ENCODE measurements at regions of chr17 and their contacts with region 1.

Region 1: DNA sequence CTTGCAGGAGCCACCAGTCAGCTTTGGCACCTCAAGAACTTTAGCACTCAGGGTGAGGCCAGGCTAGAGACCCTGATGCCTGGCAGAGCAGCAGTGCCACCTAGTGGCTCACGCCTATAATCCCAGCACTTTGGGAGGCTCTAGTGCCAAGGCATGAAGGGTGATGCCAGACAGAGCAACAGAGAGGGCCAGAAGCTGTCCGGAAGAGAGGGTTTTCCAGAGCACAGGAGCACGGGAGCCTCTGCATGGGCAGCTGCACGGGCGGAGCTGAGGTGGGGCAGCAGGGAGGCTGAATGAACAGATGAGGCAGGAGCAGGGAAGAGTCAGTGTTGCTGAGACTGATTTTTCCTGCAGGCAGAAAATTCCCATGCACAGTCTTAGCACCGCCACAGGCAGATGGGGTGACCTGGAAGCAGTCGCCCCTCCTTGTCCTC is 38.9 kb downstream of the MYH3 start:
- DNase-seq: peak; percentile 55 to 60
- H3K4me3 ChIP-seq: no peak overlapping the region
- H3K27ac ChIP-seq: no peak overlapping the region
- H3K4me1 ChIP-seq: no peaks in the 10 kb centered on the region
- H3K27me3 ChIP-seq: peaks cover 20% of the 10 kb centered on the region
- CTCF ChIP-seq: peak; percentile 78

Region 2: DNA sequence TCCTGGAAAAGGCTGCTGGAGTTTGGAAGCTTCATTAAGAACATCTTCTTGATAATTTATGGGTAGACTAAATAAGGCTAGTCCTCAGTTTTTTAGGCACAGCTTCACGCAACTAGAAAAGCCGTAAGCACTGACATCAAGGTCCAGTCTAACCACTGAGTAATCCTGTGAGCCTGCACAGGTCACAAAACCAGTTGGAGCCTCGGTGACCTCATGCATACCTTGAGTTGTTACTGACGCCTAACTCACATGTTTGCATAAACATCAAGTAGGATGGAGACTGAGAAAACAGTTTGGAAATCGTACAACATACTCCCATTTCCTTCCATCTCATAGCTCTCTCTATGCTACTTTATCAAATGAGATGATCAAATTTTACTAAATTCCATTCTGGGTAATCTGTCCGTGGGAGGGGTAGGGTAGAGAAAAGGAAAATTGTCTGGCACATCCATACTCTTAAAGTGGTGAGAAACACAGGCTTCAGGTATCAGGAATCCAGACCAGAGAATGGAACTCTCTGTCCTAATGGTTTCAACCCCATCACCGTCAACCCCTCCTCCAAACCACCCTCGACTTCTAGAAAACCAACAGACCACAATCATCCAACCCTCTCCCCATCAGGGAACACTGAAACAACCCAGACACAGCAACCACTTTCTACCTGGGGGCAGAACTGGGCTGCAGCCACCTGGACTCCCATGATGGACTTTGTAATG is 649.2 kb before region 1 on chr17:
- CTCF ChIA-PET with region 1: no interaction called
- POLR2A ChIA-PET with region 1: no interaction called
- intact Hi-C with region 1: loop called (anchors 1 kb)
- DNase-seq: peak in 1 of 2 experiments; percentile 40
- H3K4me3 ChIP-seq: no peak overlapping the region
- H3K27ac ChIP-seq: no peak overlapping the region
- H3K4me1 ChIP-seq: no peaks in the 10 kb centered on the region
- H3K27me3 ChIP-seq: peaks cover 66% of the 10 kb centered on the region
- CTCF ChIP-seq: no peak

Region 3: DNA sequence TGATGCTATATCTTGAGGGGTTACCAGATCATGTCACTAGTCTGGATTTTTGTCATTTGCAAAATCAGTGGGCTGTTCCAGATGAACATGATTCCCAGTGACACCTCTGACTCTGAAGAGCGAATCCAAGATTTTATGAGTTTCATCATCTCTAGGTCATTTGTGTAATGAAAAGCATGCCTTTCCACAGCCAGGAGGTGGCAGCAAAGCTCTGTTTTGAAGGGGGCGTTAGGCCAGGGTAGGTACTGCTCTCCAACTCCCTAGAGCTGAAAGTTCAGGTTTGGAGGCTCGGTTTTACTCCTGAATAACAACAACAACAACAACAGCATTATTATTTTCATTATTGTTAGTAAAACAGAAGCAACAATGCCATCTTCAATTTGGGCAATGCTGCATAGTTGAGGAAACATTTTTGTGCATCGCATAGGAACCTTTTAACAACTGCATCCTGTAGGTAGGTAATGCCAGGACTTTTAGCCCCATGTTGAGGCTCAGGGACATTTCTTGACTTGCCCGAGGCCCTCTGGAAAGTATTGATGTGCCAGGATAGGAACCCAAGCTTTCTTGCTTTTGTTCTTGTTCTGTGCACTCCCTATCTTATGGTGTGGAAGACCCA is 322.4 kb before region 1 on chr17:
- CTCF ChIA-PET with region 1: interaction called, 4 read pairs
- POLR2A ChIA-PET with region 1: no interaction called
- intact Hi-C with region 1: loop called (anchors 10 kb)
- DNase-seq: peak in 1 of 2 experiments; percentile 18
- H3K4me3 ChIP-seq: no peak overlapping the region
- H3K27ac ChIP-seq: no peak overlapping the region
- H3K4me1 ChIP-seq: no peaks in the 10 kb centered on the region
- H3K27me3 ChIP-seq: no peaks in the 10 kb centered on the region
- CTCF ChIP-seq: peak; percentile 58

Region 4: GRCh38 chr17:10327640-10328039 is 290.6 kb before region 1 on chr17:
- CTCF ChIA-PET with region 1: no interaction called
- POLR2A ChIA-PET with region 1: no interaction called
- intact Hi-C with region 1: loop called (anchors 1 kb)
- DNase-seq: peak; percentile 36 to 62
- H3K4me3 ChIP-seq: no peak overlapping the region
- H3K27ac ChIP-seq: no peak overlapping the region
- H3K4me1 ChIP-seq: no peaks in the 10 kb centered on the region
- H3K27me3 ChIP-seq: peaks cover 4% of the 10 kb centered on the region; the same call in 1 of the 2 replicates
- CTCF ChIP-seq: peak; percentile 86

Region 5: GRCh38 chr17:10683853-10684252 is 65.6 kb after region 1 on chr17:
- CTCF ChIA-PET with region 1: no interaction called
- POLR2A ChIA-PET with region 1: no interaction called
- intact Hi-C with region 1: no loop called
- DNase-seq: no peak
- H3K4me3 ChIP-seq: no peak overlapping the region
- H3K27ac ChIP-seq: no peak overlapping the region
- H3K4me1 ChIP-seq: no peaks in the 10 kb centered on the region
- H3K27me3 ChIP-seq: no peaks in the 10 kb centered on the region
- CTCF ChIP-seq: peak; percentile 53; the same call in 1 of the 2 replicates

Region 6: GRCh38 chr17:10727192-10727976 is 109.2 kb after region 1 on chr17:
- CTCF ChIA-PET with region 1: no interaction called
- POLR2A ChIA-PET with region 1: no interaction called
- intact Hi-C with region 1: no loop called
- DNase-seq: no peak
- H3K4me3 ChIP-seq: no peak overlapping the region
- H3K27ac ChIP-seq: no peak overlapping the region
- H3K4me1 ChIP-seq: no peaks in the 10 kb centered on the region
- H3K27me3 ChIP-seq: peaks cover 29% of the 10 kb centered on the region; the same call in 1 of the 2 replicates
- CTCF ChIP-seq: no peak

Region 7: DNA sequence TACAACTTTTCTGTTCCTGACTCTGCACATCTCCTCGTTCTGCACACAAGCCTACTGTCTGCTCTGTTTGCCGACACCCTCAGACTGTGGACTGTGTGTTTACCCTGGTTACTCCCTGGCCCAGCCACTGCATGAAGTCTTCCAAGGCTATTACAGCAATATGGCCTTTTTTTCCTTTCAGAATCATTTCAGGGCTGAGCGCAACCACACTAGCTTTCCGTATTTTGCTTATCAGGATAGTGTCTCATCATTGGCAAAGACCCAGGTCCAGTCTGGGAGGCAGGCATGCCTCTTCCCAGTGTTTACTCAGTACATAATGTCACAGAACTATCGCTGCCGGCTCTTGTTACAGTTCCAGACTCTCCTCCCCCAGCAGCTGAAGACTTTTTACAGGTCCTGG is 990.2 kb after region 1 on chr17:
- CTCF ChIA-PET with region 1: interaction called, 11 read pairs
- POLR2A ChIA-PET with region 1: no interaction called
- intact Hi-C with region 1: no loop called
- DNase-seq: no peak
- H3K4me3 ChIP-seq: no peak overlapping the region
- H3K27ac ChIP-seq: no peak overlapping the region
- H3K4me1 ChIP-seq: no peaks in the 10 kb centered on the region
- H3K27me3 ChIP-seq: peaks cover 5% of the 10 kb centered on the region; the same call in 1 of the 2 replicates
- CTCF ChIP-seq: no peak